Body of pancreas (tissue), 4 donors: ENCODE measurements at regions of chr2 and their contacts with region 1.

Region 1: DNA sequence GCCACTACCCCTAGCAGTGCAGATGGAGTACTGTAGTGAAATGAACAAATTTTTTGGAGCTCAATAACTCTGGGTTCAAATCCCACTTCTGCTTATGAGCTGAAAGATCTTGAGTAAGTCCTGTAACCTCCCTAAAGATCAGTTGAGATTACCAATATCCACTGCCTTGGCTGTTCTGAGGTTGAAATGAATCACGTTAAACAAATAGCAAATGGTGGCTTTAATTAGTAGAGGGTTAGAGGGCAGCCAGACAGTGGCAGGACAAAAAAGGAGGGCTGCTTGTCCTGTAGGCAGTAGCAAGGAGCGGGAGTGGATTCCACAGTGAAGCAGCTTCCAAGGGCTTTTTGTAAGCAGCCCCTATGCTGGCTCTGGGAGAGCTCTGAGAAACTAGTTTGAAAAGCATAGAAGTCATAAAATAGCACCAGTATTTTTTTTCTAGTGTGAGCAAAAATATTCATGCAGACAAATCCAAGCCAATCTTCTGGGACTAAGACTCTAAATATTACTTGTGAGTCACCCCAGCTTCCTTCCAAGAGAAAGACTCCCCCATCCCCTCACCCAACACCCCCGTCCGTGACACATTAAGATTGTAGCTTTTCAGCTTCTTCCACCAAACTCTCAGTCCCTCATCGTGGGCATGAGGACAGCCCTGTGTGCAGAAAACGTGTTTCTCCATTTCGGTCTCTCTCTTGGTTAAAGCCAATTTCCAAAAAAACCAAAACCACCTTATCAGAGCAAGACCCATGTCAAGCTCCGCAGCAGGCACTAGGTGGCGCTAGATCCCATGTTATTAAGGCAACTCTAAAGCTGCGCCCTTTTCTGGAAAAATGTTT is 123.5 kb upstream of the LGALSL start:
- DNase-seq: peak; percentile 79 to 84 (median 80)
- ATAC-seq: peak; percentile 77
- H3K4me3 ChIP-seq: no peak overlapping the region
- H3K27ac ChIP-seq: peak overlapping the region in 1 of 4 donors; percentile 6
- H3K4me1 ChIP-seq: peaks cover 8% of the 10 kb centered on the region
- H3K27me3 ChIP-seq: no peaks in the 10 kb centered on the region
- CTCF ChIP-seq: peak; percentile 77 to 95 (median 93)
- POLR2A ChIP-seq: no peak

Region 2: GRCh38 chr2:64166637-64167420 is 163.7 kb before region 1 on chr2:
- intact Hi-C with region 1: no loop called
- DNase-seq: no peak
- ATAC-seq: no peak
- H3K4me3 ChIP-seq: no peak overlapping the region
- H3K27ac ChIP-seq: no peak overlapping the region
- H3K4me1 ChIP-seq: no peaks in the 10 kb centered on the region
- H3K27me3 ChIP-seq: no peaks in the 10 kb centered on the region
- CTCF ChIP-seq: no peak
- POLR2A ChIP-seq: no peak

Region 3: GRCh38 chr2:64488050-64488974 is 157.8 kb after region 1 on chr2:
- intact Hi-C with region 1: loop called (anchors 5 kb)
- DNase-seq: peak; percentile 49 to 74 (median 64)
- ATAC-seq: peak; percentile 75
- H3K4me3 ChIP-seq: no peak overlapping the region
- H3K27ac ChIP-seq: no peak overlapping the region
- H3K4me1 ChIP-seq: no peaks in the 10 kb centered on the region
- H3K27me3 ChIP-seq: no peaks in the 10 kb centered on the region
- CTCF ChIP-seq: peak; percentile 79 to 99 (median 90)
- POLR2A ChIP-seq: no peak